Mammary epithelial cell (primary cell): ENCODE measurements at regions of chr14 and their contacts with region 1.

Region 1: DNA sequence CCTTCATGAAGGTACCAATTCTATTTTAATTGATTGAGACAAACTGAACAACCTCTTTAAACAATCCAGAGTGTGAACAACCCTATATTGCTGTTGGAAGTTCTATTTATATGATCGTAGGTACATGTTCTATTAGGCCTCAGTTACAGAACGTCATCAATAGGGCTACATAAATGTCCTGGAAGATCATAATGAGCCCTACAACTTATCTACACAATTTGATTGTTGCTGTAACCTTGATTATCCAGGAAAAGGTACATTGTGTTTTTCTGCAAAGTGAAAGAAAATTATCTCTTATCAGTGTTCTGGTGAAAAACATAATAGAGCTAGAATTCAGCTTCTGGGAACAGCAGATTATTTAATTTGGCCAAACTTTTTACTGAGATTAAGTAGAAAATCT is 612.9 kb downstream of the GALC start:
- DNase-seq: no peak
- H3K4me3 ChIP-seq: no peak overlapping the region
- H3K27ac ChIP-seq: no peak overlapping the region
- H3K4me1 ChIP-seq: no peaks in the 10 kb centered on the region
- H3K27me3 ChIP-seq: no peaks in the 10 kb centered on the region
- CTCF ChIP-seq: no peak

Region 2: DNA sequence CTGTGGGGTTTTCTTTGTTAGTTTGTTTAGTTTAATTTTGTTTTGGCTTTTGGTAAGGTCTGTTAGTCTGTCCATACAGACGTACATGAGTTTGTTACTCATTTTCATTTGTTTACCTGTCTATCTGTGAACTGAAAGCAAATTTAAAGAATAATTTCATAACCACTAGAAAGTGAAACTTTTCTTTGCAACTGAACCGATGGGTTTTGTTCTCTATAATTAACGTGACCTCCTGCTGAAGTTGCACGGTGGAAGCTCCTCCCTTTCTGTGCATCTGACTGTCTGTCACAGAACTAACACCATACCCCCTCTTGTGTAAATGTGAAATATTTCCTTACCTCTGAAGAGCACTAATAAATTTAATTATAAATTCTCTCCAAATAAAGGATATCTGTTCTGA is 17.4 kb after region 1 on chr14:
- CTCF ChIA-PET with region 1: no interaction called
- dilution Hi-C with region 1: no loop called
- in situ Hi-C with region 1: no loop called
- intact Hi-C with region 1: loop called (anchors 1 kb)
- DNase-seq: no peak
- H3K4me3 ChIP-seq: no peak overlapping the region
- H3K27ac ChIP-seq: no peak overlapping the region
- H3K4me1 ChIP-seq: no peaks in the 10 kb centered on the region
- H3K27me3 ChIP-seq: no peaks in the 10 kb centered on the region
- CTCF ChIP-seq: no peak